PC-3 (cell line): ENCODE measurements at regions of chr10 and their contacts with region 1.

Region 1: DNA sequence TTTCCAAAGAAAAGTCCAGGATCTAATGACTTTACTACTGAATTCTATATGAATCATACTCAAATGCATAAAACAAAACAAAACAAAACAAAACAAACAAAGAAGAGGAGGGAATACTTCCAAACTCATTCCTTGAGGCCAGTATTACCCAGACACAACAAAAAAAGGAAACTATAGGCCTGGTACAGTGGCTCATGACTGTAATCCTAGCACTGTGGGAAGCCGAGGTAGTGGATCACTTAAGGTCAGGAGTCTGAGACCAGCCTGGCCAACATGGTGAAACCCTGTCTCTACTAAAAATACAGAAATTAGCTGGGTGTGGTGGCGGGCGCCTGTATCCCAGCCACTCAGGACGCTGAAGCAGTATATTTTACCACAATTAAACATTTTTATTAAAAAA is 114.6 kb downstream of the NRBF2 start:
- DNase-seq: peak; percentile 84
- ATAC-seq: peak; percentile 95
- H3K4me3 ChIP-seq: no peak overlapping the region
- H3K27ac ChIP-seq: peak overlapping the region; percentile 28
- H3K4me1 ChIP-seq: peaks cover 22% of the 10 kb centered on the region
- H3K27me3 ChIP-seq: no peaks in the 10 kb centered on the region
- CTCF ChIP-seq: no peak

Region 2: DNA sequence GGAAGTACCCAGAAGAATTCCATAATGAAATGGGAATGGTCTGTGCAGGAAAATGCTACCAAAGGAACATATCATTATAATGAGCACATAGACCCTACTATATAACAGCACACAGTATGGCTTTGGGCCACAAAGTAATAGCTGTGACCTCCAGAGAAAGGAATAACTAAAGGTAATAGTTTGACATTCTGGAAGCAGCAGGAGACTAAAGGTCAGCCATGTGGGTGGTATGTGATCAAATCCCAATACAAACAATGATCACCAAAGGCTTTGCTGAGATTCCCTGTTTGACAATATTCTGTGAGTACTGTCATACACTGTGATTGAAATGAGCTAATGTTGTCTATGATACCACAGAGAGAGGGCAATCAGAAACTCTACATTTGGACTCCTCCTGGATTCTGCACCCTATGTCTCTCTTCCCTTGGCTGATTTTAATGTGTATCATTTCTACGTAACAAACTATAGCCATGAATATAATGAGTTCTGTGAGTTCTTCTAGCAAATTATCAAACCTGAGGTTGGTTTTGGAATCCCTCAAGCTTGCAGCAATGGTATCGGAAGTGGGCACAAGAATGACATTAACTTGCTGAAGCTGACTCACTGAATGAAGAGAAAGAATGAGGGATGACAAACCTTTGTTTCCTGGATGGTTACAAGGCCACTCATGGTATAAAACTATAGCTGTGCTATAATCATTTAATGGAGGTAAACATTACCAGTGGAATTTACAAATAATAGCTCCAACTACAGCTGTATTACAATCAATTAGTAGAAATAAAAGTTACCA is 118.4 kb after region 1 on chr10:
- CTCF ChIA-PET with region 1: no interaction called
- POLR2A ChIA-PET with region 1: interaction called, 11 read pairs
- intact Hi-C with region 1: no loop called
- DNase-seq: peak; percentile 84
- ATAC-seq: peak; percentile 90
- H3K4me3 ChIP-seq: no peak overlapping the region
- H3K27ac ChIP-seq: peak overlapping the region; percentile 31
- H3K4me1 ChIP-seq: peaks cover 11% of the 10 kb centered on the region
- H3K27me3 ChIP-seq: no peaks in the 10 kb centered on the region
- CTCF ChIP-seq: no peak

Region 3: DNA sequence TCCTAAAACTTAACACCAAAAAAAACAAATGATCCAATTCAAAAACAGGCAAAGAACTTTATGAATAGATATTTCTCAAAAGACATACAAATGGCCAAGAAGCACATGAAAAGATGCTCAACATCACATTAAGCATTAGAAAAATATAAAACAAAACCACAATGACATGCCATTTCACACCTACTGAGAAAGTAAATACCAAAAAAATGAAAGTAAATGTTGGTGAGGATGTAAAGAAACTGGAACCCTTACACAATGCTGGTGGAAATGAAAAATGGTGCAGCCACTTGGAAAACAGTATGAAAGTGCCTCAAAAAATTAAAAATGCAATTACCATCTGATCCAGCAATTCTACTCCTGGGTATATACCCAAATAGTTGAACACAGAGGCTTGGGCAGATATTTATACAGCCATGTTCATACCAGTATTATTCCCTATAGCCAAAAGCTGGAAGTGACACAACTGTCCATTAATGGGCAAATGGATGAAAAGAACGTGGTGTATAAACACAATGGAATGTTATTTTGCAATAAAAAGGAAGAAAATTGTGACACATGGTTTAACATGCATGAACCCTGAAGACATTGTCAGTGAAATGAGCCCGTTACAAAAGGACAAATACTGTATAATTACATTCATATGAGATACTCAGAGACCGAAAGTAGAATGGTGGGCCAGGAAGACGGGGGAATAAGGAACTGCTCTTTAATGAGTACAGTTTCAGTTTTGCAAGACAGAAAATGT is 129.0 kb after region 1 on chr10:
- CTCF ChIA-PET with region 1: no interaction called
- POLR2A ChIA-PET with region 1: interaction called, 10 read pairs
- intact Hi-C with region 1: no loop called
- DNase-seq: peak; percentile 90
- ATAC-seq: peak; percentile 70
- H3K4me3 ChIP-seq: 0 out of 2 replicates have a peak overlapping the region, but pooled peaks have one; percentile 4
- H3K27ac ChIP-seq: peak overlapping the region; percentile 2; the same call in 1 of the 2 replicates
- H3K4me1 ChIP-seq: peaks cover 9% of the 10 kb centered on the region
- H3K27me3 ChIP-seq: no peaks in the 10 kb centered on the region
- CTCF ChIP-seq: no peak